Mammary epithelial cell (primary cell): ENCODE measurements at regions of chr17 and their contacts with region 1.

Region 1: DNA sequence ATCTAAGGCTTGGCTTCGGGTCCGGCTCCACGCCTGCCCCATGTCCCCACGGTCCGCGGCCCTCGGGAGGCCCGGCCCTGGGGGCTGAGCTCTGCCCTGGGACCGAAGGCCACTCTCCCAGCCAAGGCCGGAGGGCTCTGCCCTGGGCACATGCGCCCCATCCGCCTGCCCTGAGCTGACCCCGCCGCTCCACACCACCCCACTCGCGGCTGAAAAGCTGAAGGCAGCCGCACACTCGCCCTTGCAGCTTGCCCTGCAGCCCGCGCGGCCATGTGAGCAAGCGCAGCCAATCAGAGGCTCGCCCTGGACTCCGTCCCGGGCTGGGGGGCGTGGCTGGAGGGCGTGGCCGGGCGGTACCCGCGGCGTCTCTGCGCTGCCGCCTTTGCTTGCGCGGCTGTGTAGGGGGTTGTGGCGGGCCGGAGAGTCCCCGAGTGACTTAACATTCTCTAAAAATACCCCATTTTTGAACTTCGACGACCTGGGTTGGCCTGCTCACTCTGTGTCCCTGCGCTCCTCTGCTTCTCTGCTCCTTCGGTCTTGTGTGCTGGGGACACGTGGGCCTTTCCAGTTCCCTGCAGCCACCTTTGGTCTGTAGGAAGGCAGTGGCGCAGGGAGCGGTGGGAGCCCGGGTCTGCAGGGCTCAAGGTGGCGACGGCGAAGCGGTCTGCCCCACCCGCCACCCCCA is 8.8 kb upstream of the MAP2K3 start:
- DNase-seq: peak; percentile 70
- H3K4me3 ChIP-seq: peak overlapping the region; percentile 58 to 66 (median 62)
- H3K27ac ChIP-seq: no peak overlapping the region
- H3K4me1 ChIP-seq: peaks cover 15% of the 10 kb centered on the region
- H3K27me3 ChIP-seq: no peaks in the 10 kb centered on the region
- CTCF ChIP-seq: no peak

Region 2: DNA sequence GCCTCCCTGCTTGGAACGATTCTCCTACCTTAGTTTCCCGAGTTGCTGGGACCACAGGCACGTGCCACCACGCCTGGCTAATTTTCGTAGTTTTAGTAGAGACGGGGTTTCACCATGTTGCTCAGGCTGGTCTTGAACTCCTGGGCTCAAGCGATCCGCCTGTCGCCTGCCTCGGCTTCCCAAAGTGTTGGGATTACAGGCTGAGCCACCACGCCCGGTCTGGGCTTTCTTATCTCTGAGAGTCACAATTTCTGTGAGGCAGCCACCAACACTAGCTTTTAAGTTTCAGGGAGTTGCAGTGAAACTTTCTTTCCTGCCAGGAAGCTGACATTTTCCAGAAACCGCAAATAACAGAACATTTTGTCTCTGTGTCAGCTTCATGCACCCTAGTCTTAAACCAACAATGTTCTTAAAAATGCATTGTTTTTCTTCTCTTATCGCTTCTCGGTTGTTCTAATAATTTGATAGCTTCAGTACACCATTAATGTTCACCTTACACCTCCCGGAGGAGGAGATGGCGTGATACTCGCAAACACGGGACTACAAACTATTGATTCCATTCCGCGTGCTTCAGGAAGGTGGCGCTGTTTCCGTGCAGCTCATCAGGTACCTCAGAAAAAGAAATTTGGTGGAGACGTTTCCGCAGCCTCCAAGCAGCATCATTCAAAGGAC is 156.3 kb before region 1 on chr17:
- CTCF ChIA-PET with region 1: no interaction called
- dilution Hi-C with region 1: loop called (anchors 5 kb)
- in situ Hi-C with region 1: loop called in 1 of 2 experiments (anchors 10 kb)
- intact Hi-C with region 1: no loop called
- DNase-seq: peak; percentile 59
- H3K4me3 ChIP-seq: no peak overlapping the region
- H3K27ac ChIP-seq: no peak overlapping the region
- H3K4me1 ChIP-seq: no peaks in the 10 kb centered on the region
- H3K27me3 ChIP-seq: no peaks in the 10 kb centered on the region
- CTCF ChIP-seq: peak; percentile 94 to 98

Region 3: DNA sequence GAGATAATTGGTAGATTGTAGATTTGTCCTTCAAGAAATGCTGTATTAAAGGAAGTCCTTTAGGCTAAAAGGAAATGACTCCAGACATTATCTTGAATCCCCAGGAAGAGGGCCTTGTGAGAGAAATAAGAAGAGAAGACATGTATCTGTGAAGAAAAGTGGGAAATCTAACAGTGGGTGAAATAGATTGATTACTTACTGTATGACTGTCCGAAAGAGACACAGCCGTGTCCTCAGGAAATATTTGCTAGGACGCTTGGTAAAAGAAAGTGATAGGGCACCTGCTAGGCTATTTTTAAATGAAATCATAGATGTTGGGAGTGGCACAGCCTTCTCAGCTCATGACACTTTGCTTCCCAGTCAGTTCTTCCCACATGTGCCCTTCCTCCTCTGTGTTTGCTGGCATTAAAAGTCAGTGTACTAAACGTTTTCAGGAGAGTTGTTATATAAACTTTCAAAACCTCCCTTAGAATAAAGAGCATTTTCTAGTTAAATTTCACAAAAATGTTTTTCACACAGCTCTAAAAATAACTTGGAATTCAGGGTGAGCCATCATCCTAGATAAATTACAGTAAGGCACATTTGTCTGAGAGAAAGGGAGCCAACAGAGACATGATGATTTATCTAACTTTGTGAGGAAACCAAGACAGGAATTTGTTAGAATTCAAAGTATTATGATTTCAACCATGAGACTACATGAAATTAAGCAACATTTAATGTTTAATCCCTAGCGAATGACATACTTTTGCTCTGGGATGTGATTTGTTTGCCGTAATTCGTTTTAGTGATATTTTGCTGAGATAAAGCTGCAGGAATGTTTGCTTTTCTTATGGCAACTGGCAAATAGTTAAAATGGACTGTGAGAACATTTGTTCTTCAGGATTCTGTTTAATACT is 114.0 kb before region 1 on chr17:
- CTCF ChIA-PET with region 1: no interaction called
- dilution Hi-C with region 1: no loop called
- in situ Hi-C with region 1: no loop called
- intact Hi-C with region 1: no loop called
- DNase-seq: no peak
- H3K4me3 ChIP-seq: no peak overlapping the region
- H3K27ac ChIP-seq: no peak overlapping the region
- H3K4me1 ChIP-seq: peaks cover 3% of the 10 kb centered on the region
- H3K27me3 ChIP-seq: no peaks in the 10 kb centered on the region
- CTCF ChIP-seq: no peak

Region 4: DNA sequence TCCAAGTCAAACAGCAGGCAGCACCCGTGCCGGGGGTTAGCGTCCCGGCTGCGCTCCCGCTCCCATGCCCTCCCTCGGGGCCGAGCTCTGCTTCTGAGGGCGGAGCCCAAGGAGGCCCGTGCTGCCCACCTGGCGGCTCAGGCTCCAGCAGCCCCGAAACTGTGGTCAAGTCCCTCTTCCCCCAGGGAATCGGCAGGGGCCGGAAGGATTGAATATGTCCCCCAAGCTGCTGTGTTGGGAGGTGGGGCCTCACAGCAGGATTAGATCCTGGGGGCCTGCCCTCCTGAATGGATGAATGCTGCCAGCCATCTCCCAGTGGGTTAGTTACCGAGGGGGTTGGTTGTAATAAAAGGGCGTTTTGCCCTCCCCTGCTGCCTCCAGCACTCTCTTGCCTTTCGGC is 42.7 kb after region 1 on chr17:
- CTCF ChIA-PET with region 1: no interaction called
- dilution Hi-C with region 1: no loop called
- in situ Hi-C with region 1: no loop called
- intact Hi-C with region 1: loop called (anchors 2 kb)
- DNase-seq: no peak
- H3K4me3 ChIP-seq: no peak overlapping the region
- H3K27ac ChIP-seq: no peak overlapping the region
- H3K4me1 ChIP-seq: no peaks in the 10 kb centered on the region
- H3K27me3 ChIP-seq: no peaks in the 10 kb centered on the region
- CTCF ChIP-seq: no peak